CD8-positive, alpha-beta T cell (primary cell): ENCODE measurements at regions of chr1 and their contacts with region 1.

Region 1: DNA sequence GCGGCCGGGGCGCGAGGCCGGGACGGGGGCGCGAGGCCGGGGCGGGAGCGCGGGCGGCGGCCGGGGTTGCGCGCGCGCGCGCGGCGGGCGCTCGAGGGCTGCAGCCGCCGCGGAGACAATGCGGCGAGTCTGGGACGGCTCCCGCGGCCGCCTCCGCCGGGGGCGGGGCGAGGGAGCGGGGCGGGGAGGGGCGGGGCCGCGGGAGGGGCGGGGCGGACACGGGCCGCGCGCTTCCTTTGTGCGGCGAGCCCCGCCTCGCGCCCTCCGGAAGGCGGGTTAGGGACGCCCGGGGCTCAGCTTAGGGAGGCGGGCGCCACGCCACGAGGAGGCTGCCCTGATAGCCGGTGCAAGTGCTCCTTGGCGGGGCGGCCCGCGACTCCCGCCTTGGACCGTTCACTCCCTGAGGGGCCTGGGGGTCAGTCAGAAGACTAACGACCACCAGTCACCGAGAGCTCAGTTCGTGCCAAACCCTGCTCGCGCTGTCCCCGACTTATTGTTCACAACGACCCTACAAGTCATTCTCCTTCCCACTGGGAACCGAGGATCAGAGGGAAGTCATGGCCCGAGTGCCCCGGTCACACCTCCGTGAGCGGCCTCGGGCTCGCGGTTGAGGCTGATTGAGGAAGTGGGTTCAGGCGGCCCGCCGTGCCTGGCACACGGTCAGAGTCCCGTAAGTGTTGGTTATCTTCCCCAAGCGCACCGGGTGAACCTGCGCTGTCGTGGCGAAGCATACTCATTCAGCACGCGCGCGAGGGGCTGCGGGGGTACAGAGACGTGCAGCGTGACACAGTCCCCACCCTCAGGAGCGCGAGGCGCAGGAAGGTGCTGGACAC is 29.1 kb upstream of the A3GALT2 start:
- DNase-seq: peak; percentile 64 to 92 (median 75)
- ATAC-seq: peak; percentile 86
- H3K4me3 ChIP-seq: peak overlapping the region; percentile 82 to 93
- H3K4me3 Mint-ChIP-seq: peak overlapping the region; percentile 91
- H3K27ac ChIP-seq: peak overlapping the region; percentile 63 to 75
- H3K27ac Mint-ChIP-seq: peak overlapping the region; percentile 76
- H3K4me1 ChIP-seq: peaks cover 32% of the 10 kb centered on the region
- H3K4me1 Mint-ChIP-seq: peaks cover 48% of the 10 kb centered on the region
- H3K27me3 ChIP-seq: no peaks in the 10 kb centered on the region
- H3K27me3 Mint-ChIP-seq: no peaks in the 10 kb centered on the region
- CTCF ChIP-seq: no peak

Region 2: DNA sequence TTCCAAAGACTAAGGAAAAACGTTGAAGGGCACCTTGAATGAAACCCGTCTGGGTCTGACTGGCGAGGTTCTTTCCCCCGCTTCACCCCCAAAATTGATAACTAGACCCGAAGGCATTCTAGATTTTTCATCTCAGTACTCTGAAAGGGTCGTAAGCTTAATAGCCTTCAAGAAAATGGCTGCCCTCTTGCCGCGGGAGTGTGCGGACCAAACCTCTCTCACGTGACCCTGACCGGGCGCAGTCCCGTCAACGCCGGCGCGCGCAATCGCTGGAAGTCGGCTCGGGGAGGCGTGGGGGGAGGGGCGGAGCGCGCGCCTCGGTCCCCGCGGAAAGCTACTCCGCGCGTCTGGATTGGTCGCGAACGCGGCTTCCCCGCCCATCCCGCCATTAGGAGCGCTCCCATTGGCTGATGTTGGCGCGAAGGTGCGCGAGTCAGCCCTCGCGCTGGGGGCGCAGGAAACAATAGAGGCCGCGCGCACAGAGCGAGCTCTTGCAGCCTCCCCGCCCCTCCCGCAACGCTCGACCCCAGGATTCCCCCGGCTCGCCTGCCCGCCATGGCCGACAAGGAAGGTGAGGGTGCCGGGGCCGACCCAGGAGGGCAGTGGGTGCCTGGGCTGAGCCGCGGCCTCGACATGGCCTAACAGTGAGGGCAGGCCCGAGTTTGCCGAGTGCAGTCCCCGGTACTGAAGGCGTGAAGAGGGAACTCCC is 699.1 kb before region 1 on chr1 and contains the start of gene RBBP4:
- CTCF ChIA-PET with region 1: no interaction called
- POLR2A ChIA-PET with region 1: no interaction called
- intact Hi-C with region 1: loop called in 1 of 2 experiments (anchors 2 kb)
- DNase-seq: peak; percentile 96 to 100 (median 99)
- ATAC-seq: peak; percentile 83
- H3K4me3 ChIP-seq: peak within 1 kb of the TSS; percentile 82 to 97
- H3K4me3 Mint-ChIP-seq: peak within 1 kb of the TSS; percentile 93
- H3K27ac ChIP-seq: peak within 1 kb of the TSS; percentile 98 to 99
- H3K27ac Mint-ChIP-seq: peak within 1 kb of the TSS; percentile 99
- H3K4me1 ChIP-seq: peaks cover 51% of the 10 kb centered on the region
- H3K4me1 Mint-ChIP-seq: peaks cover 60% of the 10 kb centered on the region
- H3K27me3 ChIP-seq: no peaks in the 10 kb centered on the region
- H3K27me3 Mint-ChIP-seq: no peaks in the 10 kb centered on the region
- CTCF ChIP-seq: no peak
- total RNA-seq, gene RBBP4: 109 to 121 TPM

Region 3: GRCh38 chr1:33080885-33081553 is 269.0 kb before region 1 on chr1 and contains the start of gene AZIN2:
- CTCF ChIA-PET with region 1: no interaction called
- POLR2A ChIA-PET with region 1: no interaction called
- intact Hi-C with region 1: loop called in 1 of 2 experiments (anchors 5 kb)
- DNase-seq: peak; percentile 92 to 100 (median 97)
- ATAC-seq: peak; percentile 99
- H3K4me3 ChIP-seq: peak within 1 kb of the TSS; percentile 57 to 89
- H3K4me3 Mint-ChIP-seq: peak within 1 kb of the TSS; percentile 82
- H3K27ac ChIP-seq: peak within 1 kb of the TSS; percentile 28 to 54
- H3K27ac Mint-ChIP-seq: peak within 1 kb of the TSS; percentile 82
- H3K4me1 ChIP-seq: peaks cover 22% of the 10 kb centered on the region
- H3K4me1 Mint-ChIP-seq: peaks cover 29% of the 10 kb centered on the region
- H3K27me3 ChIP-seq: peaks cover 0 to 2% of the 10 kb centered on the region in 2 experiments
- H3K27me3 Mint-ChIP-seq: no peaks in the 10 kb centered on the region
- CTCF ChIP-seq: no peak
- total RNA-seq, gene AZIN2: 3.5 to 4.1 TPM

Region 4: DNA sequence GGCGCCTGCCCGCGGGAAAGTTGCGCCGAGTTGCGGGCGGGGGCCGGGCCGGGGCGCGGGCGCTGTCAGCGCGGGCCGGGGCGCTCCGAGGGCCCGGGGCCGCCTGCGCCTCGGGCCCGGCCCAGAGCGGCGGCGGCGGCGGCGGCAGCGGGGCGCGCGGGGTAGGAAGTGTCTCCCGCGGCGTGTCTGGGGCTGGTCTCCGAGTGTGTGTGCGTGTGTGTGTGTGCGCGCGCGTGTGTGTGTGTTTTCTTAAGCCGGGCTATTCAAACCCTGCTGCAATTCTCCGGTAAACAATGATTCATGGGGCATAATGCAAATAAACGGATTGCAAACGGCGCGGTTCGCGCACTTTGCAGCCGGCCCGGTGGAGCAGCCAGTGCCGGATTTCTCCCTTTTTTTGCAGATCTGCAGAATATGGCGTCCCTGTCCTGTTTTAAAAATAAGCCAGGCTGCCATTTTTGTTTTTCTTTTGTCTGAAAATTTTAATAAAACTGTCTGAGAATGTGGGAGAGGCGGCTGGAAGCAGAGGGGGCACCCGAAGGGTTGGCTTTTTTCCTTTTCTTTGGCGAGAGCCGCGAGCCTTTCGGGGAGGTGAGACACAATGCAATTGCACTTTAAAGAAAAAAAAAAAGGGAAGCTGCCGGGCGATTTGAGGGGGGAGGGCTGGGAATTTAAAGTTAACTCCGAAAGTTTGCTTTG is 93.1 kb before region 1 on chr1:
- CTCF ChIA-PET with region 1: no interaction called
- POLR2A ChIA-PET with region 1: no interaction called
- intact Hi-C with region 1: loop called in 1 of 2 experiments (anchors 2 kb)
- DNase-seq: peak; percentile 13 to 73 (median 55)
- ATAC-seq: peak; percentile 65
- H3K4me3 ChIP-seq: peak overlapping the region; percentile 62 to 75
- H3K4me3 Mint-ChIP-seq: peak overlapping the region; percentile 99
- H3K27ac ChIP-seq: peak overlapping the region; percentile 48 to 51
- H3K27ac Mint-ChIP-seq: peak overlapping the region; percentile 97
- H3K4me1 ChIP-seq: peaks cover 42% of the 10 kb centered on the region
- H3K4me1 Mint-ChIP-seq: peaks cover 47% of the 10 kb centered on the region
- H3K27me3 ChIP-seq: no peaks in the 10 kb centered on the region
- H3K27me3 Mint-ChIP-seq: no peaks in the 10 kb centered on the region
- CTCF ChIP-seq: no peak

Region 5: GRCh38 chr1:33306648-33307493 is 43.1 kb before region 1 on chr1:
- CTCF ChIA-PET with region 1: no interaction called
- POLR2A ChIA-PET with region 1: no interaction called
- intact Hi-C with region 1: no loop called
- DNase-seq: peak in 1 of 9 experiments; percentile 33
- ATAC-seq: no peak
- H3K4me3 ChIP-seq: no peak overlapping the region
- H3K4me3 Mint-ChIP-seq: no peak overlapping the region
- H3K27ac ChIP-seq: no peak overlapping the region
- H3K27ac Mint-ChIP-seq: no peak overlapping the region
- H3K4me1 ChIP-seq: peaks cover 17% of the 10 kb centered on the region
- H3K4me1 Mint-ChIP-seq: peaks cover 16% of the 10 kb centered on the region
- H3K27me3 ChIP-seq: no peaks in the 10 kb centered on the region
- H3K27me3 Mint-ChIP-seq: peaks cover 12% of the 10 kb centered on the region
- CTCF ChIP-seq: no peak

Region 6: DNA sequence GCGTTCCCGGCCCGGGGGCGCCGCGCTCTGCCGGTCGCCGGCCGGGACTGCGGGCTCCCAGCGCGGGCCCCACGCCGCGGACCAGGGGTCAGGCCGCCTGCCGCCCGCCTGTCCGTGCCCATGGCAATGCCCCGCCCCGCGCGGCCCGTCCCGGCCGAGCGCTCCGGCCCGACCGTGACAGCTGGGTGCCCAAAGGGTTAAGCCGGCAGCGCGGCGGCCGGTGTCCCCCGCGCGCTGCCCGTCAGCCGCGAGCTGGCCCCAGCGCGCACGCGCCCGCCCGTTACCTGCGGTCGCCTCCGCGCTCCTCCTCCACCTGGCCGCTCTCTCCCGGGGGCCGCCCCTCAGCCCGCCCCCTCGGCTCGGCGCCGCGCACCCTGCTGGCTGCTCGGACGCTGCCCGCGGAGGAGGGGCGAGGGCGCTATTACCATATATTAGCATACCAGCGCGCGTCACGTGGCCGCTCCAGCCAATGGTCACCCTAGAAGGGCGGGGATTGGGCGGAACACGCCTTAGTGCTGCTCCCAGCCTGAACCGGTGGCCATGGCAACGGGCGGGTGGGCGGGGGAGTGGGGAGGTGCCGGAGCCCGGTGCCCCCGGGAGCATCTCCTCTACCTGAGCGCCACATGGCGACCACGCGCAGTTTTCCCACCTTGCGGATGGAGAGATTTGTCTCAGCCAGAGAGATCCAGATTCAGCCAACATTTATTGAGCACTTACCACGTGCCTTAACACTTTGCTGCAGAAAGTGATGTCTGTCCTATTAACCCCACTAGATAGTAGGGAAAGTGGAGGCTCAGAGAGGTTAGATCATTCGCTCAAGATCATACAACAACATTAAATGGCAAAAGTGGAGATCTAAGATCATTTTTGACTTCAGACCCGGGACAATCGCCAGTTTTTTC is 80.9 kb after region 1 on chr1 and contains the start of gene PHC2:
- CTCF ChIA-PET with region 1: no interaction called
- POLR2A ChIA-PET with region 1: no interaction called
- intact Hi-C with region 1: loop called in 1 of 2 experiments (anchors 2 kb)
- DNase-seq: peak; percentile 80 to 96 (median 89)
- ATAC-seq: peak; percentile 95
- H3K4me3 ChIP-seq: peak within 1 kb of the TSS; percentile 31 to 47
- H3K4me3 Mint-ChIP-seq: peak within 1 kb of the TSS; percentile 77
- H3K27ac ChIP-seq: no peak within 1 kb of the TSS
- H3K27ac Mint-ChIP-seq: no peak within 1 kb of the TSS
- H3K4me1 ChIP-seq: no peaks in the 10 kb centered on the region
- H3K4me1 Mint-ChIP-seq: peaks cover 3% of the 10 kb centered on the region
- H3K27me3 ChIP-seq: no peaks in the 10 kb centered on the region
- H3K27me3 Mint-ChIP-seq: peaks cover 5% of the 10 kb centered on the region
- CTCF ChIP-seq: no peak
- total RNA-seq, gene PHC2: 39.7 to 40.4 TPM